ENCODE measurements at regions of chr1 and their contacts with region 1.

Region 1: GRCh38 chr1:233295237-233295974 is at the start of gene PCNX2:
- DNase-seq: peak; percentile 71 to 73
- H3K4me3 ChIP-seq: peak within 1 kb of the TSS; percentile 82
- H3K27ac ChIP-seq: peak within 1 kb of the TSS; percentile 50
- H3K4me1 ChIP-seq: peaks cover 37% of the 10 kb centered on the region
- H3K27me3 ChIP-seq: no peaks in the 10 kb centered on the region
- CTCF ChIP-seq: no peak
- total RNA-seq, gene PCNX2: 18.6 and 20.3 TPM in 2 replicates

Region 2: GRCh38 chr1:233313434-233314155 is 18.2 kb after region 1 on chr1:
- CTCF ChIA-PET with region 1: no interaction called
- POLR2A ChIA-PET with region 1: no interaction called
- intact Hi-C with region 1: loop called (anchors 1 kb)
- DNase-seq: no peak
- H3K4me3 ChIP-seq: no peak overlapping the region
- H3K27ac ChIP-seq: no peak overlapping the region
- H3K4me1 ChIP-seq: no peaks in the 10 kb centered on the region
- H3K27me3 ChIP-seq: no peaks in the 10 kb centered on the region
- CTCF ChIP-seq: no peak